A673 (cell line): ENCODE measurements at regions of chr15 and their contacts with region 1.

Region 1: GRCh38 chr15:98177924-98178592 is 217.6 kb downstream of the ARRDC4 start:
- DNase-seq: peak; percentile 83
- H3K4me3 ChIP-seq: no peak overlapping the region
- H3K27ac ChIP-seq: no peak overlapping the region
- H3K4me1 ChIP-seq: no peaks in the 10 kb centered on the region
- H3K27me3 ChIP-seq: peaks cover 37% of the 10 kb centered on the region
- CTCF ChIP-seq: peak; percentile 81

Region 2: DNA sequence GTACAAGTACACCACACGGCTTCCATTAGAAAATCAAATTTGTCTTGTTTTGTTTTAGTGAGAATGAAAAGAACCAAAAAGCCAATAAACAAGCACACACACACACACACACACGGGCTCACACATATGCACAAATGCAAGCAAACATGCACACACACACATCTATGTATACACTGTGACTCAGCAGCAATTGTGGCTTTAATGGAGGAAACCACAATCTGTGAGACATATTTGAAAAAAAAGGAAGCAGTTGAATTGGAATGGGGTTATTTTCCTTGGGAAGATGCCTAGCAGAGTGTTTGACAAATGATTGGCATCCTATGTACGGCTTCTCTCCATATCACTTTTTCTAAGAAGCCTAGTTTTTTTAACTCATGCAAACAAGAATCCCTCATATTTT is 418.7 kb before region 1 on chr15:
- CTCF ChIA-PET with region 1: no interaction called
- POLR2A ChIA-PET with region 1: interaction called, 13 read pairs
- intact Hi-C with region 1: loop called (anchors 5 kb)
- DNase-seq: no peak
- H3K4me3 ChIP-seq: no peak overlapping the region
- H3K27ac ChIP-seq: no peak overlapping the region
- H3K4me1 ChIP-seq: no peaks in the 10 kb centered on the region
- H3K27me3 ChIP-seq: no peaks in the 10 kb centered on the region
- CTCF ChIP-seq: no peak

Region 3: DNA sequence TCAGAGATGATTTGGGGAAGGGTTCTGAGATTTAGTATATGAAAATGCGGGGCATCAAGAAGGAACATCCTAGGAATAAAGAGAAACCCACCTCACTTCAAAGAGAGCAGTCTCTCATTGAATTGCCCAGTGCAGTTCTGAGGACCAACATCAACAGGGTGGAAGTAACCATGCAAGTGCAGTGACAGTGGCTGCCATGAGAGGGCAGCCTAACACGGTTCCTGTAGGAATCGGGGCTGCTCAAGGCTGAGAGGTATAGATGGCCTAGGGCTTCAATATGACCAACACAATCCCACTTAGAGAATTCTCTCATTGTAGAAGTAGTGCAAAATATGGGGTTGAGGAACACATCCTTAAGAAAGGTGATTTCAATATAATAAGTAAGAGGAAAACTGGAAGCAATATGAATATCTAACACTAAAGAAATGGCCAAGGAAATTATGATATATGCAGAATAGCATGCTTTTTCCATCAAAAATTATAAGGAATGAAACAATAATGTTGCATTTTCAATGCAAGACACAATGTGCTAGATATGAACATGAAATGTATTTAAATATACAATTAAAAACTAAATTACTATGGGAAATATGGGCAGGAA is 268.7 kb before region 1 on chr15:
- CTCF ChIA-PET with region 1: interaction called, 8 read pairs
- POLR2A ChIA-PET with region 1: no interaction called
- intact Hi-C with region 1: loop called (anchors 1 kb)
- DNase-seq: peak; percentile 71
- H3K4me3 ChIP-seq: no peak overlapping the region
- H3K27ac ChIP-seq: no peak overlapping the region
- H3K4me1 ChIP-seq: no peaks in the 10 kb centered on the region
- H3K27me3 ChIP-seq: peaks cover 28% of the 10 kb centered on the region
- CTCF ChIP-seq: peak; percentile 90

Region 4: GRCh38 chr15:98160236-98160635 is 17.8 kb before region 1 on chr15:
- CTCF ChIA-PET with region 1: no interaction called
- POLR2A ChIA-PET with region 1: no interaction called
- intact Hi-C with region 1: loop called (anchors 1 kb)
- DNase-seq: peak; percentile 86
- H3K4me3 ChIP-seq: no peak overlapping the region
- H3K27ac ChIP-seq: no peak overlapping the region
- H3K4me1 ChIP-seq: peaks cover 13% of the 10 kb centered on the region
- H3K27me3 ChIP-seq: peaks cover 29% of the 10 kb centered on the region
- CTCF ChIP-seq: no peak

Region 5: DNA sequence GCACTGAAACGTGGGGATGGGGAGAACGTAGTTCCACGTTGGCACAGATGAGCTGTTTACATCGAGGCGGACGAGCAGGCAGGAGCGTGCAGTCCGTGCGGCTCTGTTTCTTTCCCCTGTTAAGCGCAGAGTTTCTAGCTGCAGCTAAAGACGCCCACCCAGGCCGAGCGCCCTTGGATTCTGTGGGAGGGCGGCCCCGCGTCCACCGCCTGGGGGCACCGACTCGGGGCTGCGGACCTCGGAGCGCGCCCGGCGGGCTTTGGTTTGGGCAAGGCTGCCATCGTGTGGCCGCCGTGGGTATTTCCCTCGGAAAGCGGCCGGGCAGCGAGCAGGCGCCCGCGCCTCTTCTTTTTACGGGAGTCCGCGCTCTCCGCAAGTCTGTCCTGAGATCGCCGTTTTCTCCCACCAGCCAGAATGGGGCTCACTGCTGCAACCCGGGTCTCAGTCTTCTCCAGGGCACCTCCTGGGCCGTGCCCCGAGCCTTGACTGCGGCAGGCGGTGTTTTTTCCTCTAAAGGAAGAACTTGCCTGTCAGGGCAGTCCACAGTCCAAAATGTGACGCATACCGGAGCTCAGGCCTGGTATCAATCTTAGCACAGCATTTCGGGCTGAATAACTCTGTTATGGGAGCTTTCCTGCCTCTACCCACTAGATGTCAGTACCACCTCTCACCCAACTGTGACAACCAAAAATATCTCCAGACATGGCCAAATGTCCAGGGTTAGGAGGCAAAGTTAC is 250.4 kb after region 1 on chr15:
- CTCF ChIA-PET with region 1: no interaction called
- POLR2A ChIA-PET with region 1: no interaction called
- intact Hi-C with region 1: loop called (anchors 5 kb)
- DNase-seq: peak; percentile 70
- H3K4me3 ChIP-seq: peak overlapping the region; percentile 40
- H3K27ac ChIP-seq: no peak overlapping the region
- H3K4me1 ChIP-seq: no peaks in the 10 kb centered on the region
- H3K27me3 ChIP-seq: peaks cover 22% of the 10 kb centered on the region
- CTCF ChIP-seq: peak; percentile 80